ENCODE measurements at regions of chr5 and their contacts with region 1.

Region 1: DNA sequence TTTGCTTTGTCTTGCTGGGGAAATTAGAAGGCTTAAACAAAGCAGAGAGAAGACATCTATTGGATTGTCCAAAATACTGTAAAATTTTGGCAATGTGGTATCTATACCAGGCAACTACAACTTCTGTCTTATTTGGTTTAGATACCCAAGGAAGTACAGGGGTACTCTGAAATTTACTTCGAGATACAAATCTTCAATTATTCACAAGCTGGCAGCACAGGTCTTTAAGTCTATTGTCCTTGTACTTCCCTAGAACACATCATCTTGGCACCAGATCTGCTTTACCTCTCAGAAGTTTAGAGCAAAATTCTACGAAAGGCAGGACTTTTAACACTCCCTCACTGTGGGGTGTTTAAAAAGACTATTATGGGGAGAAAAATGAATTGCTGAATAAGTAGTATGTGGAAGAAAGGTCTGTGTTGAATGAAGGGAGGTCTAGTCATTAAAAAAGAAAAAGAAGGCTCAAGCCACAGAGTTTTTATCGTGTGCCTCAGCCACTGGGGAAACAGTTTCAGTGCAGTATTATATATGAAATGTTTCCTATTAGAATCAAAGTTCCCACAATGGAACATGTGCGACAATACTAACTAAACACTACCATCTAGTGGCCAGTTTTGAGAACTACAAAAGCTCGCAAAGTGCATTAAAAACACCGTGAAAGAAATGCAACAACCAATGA is 93.7 kb downstream of the PDE4D start:
- DNase-seq: peak in 6 of 9 donors; percentile 4 to 52 (median 41)
- ATAC-seq: peak; percentile 84
- H3K4me3 ChIP-seq: no peak overlapping the region
- H3K4me3 Mint-ChIP-seq: no peak overlapping the region
- H3K27ac ChIP-seq: no peak overlapping the region
- H3K27ac Mint-ChIP-seq: no peak overlapping the region
- H3K4me1 ChIP-seq: peaks cover 0 to 6% of the 10 kb centered on the region in 2 donors
- H3K4me1 Mint-ChIP-seq: no peaks in the 10 kb centered on the region
- H3K27me3 ChIP-seq: no peaks in the 10 kb centered on the region
- H3K27me3 Mint-ChIP-seq: peaks cover 0 to 13% (median 5%) of the 10 kb centered on the region in 5 donors

Region 2: DNA sequence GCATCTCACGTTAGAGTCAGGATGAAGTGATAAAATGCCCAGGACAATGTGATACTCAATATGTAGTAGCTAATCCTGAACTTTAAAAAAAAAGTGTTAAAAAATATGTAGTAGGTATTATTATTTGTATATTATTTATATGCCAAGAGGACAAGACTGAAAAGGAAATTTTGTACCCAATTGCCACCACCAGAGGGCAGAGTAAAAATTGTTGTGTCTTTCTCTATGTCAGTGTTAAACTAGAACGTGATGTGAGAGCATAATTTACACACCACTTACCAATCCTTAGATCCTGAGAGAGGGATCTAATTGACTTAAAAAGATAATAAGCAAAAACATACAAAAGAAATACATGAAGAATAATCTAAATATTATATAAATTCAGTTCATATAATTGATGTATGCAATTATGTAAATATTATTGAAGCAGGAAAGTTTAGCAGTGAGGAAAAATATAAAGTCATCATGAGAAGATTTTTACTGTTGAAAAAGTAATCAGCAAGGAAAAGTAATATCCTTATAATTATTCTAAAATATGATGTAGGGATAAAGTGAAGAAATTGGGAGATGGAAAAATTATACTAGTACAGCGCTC is 928.1 kb before region 1 on chr5:
- CTCF ChIA-PET with region 1: no interaction called
- POLR2A ChIA-PET with region 1: no interaction called
- intact Hi-C with region 1: loop called (anchors 5 kb)
- DNase-seq: peak in 4 of 9 donors; percentile 27 to 30 (median 28)
- ATAC-seq: peak; percentile 53
- H3K4me3 ChIP-seq: no peak overlapping the region
- H3K4me3 Mint-ChIP-seq: no peak overlapping the region
- H3K27ac ChIP-seq: no peak overlapping the region
- H3K27ac Mint-ChIP-seq: no peak overlapping the region
- H3K4me1 ChIP-seq: no peaks in the 10 kb centered on the region
- H3K4me1 Mint-ChIP-seq: peaks cover 0 to 1% (median 0%) of the 10 kb centered on the region in 7 donors
- H3K27me3 ChIP-seq: peaks cover 0 to 4% of the 10 kb centered on the region in 2 donors
- H3K27me3 Mint-ChIP-seq: peaks cover 10 to 41% (median 16%) of the 10 kb centered on the region in 5 donors

Region 3: GRCh38 chr5:59188419-59189225 is 611.2 kb before region 1 on chr5:
- CTCF ChIA-PET with region 1: interaction called, 6 read pairs
- POLR2A ChIA-PET with region 1: no interaction called
- intact Hi-C with region 1: loop called (anchors 1 to 2 kb)
- DNase-seq: peak; percentile 16 to 76 (median 66)
- ATAC-seq: peak; percentile 92
- H3K4me3 ChIP-seq: no peak overlapping the region
- H3K4me3 Mint-ChIP-seq: peak overlapping the region in 6 of 10 donors; percentile 0 to 61 (median 38)
- H3K27ac ChIP-seq: no peak overlapping the region
- H3K27ac Mint-ChIP-seq: no peak overlapping the region
- H3K4me1 ChIP-seq: peaks cover 0 to 4% of the 10 kb centered on the region in 2 donors
- H3K4me1 Mint-ChIP-seq: peaks cover 4 to 7% (median 5%) of the 10 kb centered on the region in 7 donors
- H3K27me3 ChIP-seq: no peaks in the 10 kb centered on the region
- H3K27me3 Mint-ChIP-seq: peaks cover 6 to 49% (median 7%) of the 10 kb centered on the region in 5 donors

Region 4: GRCh38 chr5:59390074-59390659 is 409.6 kb before region 1 on chr5:
- CTCF ChIA-PET with region 1: interaction called, 27 read pairs
- POLR2A ChIA-PET with region 1: no interaction called
- intact Hi-C with region 1: loop called (anchors 1 kb)
- DNase-seq: peak in 3 of 9 donors; percentile 5 to 29 (median 16)
- ATAC-seq: no peak
- H3K4me3 ChIP-seq: no peak overlapping the region
- H3K4me3 Mint-ChIP-seq: no peak overlapping the region
- H3K27ac ChIP-seq: no peak overlapping the region
- H3K27ac Mint-ChIP-seq: no peak overlapping the region
- H3K4me1 ChIP-seq: no peaks in the 10 kb centered on the region
- H3K4me1 Mint-ChIP-seq: no peaks in the 10 kb centered on the region
- H3K27me3 ChIP-seq: no peaks in the 10 kb centered on the region
- H3K27me3 Mint-ChIP-seq: peaks cover 8 to 29% (median 20%) of the 10 kb centered on the region in 5 donors

Region 5: DNA sequence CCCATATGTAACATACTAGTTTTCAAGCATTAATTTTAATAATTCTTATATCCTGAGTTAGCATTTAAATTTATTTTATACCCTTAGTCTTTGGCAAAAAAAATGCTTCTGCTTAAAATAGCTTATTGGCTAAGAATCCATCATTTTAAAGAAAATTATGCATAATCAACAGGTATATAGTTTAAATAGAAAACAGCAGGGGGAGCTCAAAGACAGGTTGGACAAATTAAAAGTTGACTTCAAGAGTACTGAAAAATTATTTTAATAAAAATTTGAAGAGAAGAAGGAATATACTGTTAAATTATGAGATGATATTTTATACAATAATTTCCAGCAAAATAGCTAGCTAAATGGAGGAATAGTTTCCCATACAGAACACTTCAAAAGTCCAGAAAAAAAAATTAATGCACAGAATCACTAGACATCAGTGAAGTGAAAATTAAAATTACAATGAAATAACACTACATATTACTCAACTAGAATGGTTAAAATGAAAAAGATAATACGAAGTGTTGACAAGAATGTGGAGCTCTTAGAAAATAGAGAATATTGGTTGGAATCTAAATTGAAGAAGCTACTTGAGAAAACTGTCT is 293.4 kb before region 1 on chr5:
- CTCF ChIA-PET with region 1: interaction called, 4 read pairs
- POLR2A ChIA-PET with region 1: no interaction called
- intact Hi-C with region 1: loop called in 1 of 2 experiments (anchors 1 kb)
- DNase-seq: no peak
- ATAC-seq: no peak
- H3K4me3 ChIP-seq: no peak overlapping the region
- H3K4me3 Mint-ChIP-seq: no peak overlapping the region
- H3K27ac ChIP-seq: no peak overlapping the region
- H3K27ac Mint-ChIP-seq: no peak overlapping the region
- H3K4me1 ChIP-seq: no peaks in the 10 kb centered on the region
- H3K4me1 Mint-ChIP-seq: no peaks in the 10 kb centered on the region
- H3K27me3 ChIP-seq: peaks cover 0 to 2% of the 10 kb centered on the region in 2 donors
- H3K27me3 Mint-ChIP-seq: peaks cover 0 to 12% (median 4%) of the 10 kb centered on the region in 5 donors

Region 6: DNA sequence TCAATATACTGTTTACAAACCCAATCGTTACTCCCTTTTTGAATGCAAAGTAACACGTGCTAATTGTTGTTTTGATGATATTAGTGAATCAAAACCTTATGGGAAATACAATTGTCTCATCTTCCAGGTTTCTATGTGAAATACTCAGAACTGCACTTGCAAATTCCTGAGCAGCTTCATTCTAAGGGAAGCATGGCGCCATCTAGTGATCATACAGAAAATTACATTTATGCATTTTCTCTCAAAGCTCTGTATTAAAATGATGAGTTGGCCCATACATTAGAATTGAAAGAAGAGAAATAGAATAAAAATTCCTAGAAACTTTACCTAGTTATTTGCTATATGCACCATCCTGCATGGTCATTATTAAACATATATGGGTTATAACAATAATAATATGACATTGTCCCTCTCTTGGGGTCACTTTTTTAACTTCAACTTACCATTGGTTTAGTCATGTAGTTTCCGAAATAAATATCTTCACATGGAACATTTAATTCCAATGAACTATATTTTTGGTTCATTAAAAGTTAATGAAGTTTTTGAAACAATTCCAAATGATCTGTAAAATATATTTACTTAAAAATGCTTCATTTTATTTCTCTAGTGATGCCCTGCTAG is 126.3 kb before region 1 on chr5:
- CTCF ChIA-PET with region 1: interaction called, 3 read pairs
- POLR2A ChIA-PET with region 1: no interaction called
- intact Hi-C with region 1: loop called (anchors 2 to 5 kb)
- DNase-seq: peak in 5 of 9 donors; percentile 17 to 43 (median 27)
- ATAC-seq: peak; percentile 45
- H3K4me3 ChIP-seq: no peak overlapping the region
- H3K4me3 Mint-ChIP-seq: no peak overlapping the region
- H3K27ac ChIP-seq: no peak overlapping the region
- H3K27ac Mint-ChIP-seq: no peak overlapping the region
- H3K4me1 ChIP-seq: no peaks in the 10 kb centered on the region
- H3K4me1 Mint-ChIP-seq: peaks cover 0 to 5% (median 0%) of the 10 kb centered on the region in 7 donors
- H3K27me3 ChIP-seq: no peaks in the 10 kb centered on the region
- H3K27me3 Mint-ChIP-seq: peaks cover under 1 to 20% (median 6%) of the 10 kb centered on the region in 5 donors